Stomach (tissue), 19 donors: ENCODE measurements at regions of chr12 and their contacts with region 1.

Region 1: DNA sequence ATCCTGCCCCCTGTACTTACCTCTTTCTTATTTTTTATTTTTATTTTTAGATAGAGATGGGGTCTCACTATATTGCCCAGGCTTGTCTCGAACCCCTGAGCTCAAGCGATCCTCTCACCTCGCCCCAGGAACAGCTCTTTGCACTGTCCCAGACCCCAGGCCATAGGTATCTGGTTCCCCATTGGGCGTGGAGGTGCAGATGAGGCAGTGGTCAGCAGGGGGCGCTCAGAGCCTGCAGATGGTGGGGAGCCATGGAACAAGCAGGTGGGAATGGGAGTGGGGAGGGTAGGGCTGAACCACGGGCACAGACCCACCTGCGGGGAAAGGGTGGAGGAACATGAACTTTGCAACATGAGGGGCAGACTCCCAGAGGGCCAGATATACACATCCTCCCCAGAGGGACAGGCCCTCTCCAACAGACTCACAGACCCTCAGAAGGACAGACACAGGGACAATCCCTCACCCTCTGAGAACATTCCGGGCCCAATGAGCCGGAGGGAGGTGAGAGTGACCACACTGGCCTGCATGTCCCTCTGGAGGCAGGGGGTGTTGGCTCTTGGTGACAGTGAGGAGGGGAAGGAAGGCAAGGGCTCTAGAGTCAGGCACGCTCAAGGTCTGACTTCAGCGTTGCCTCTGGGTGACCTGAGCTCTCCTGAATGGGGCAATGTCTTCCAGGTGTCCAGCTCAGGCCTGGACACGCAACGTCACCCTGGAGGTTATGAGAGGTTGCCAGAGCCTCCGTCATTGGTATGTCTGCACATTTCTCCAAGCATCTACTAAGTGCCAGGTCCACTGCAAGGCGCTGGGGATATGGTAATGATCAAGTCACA is 34.9 kb downstream of the KRT80 start:
- DNase-seq: peak; percentile 85 to 91
- H3K4me3 ChIP-seq: no peak overlapping the region
- H3K27ac ChIP-seq: no peak overlapping the region
- H3K4me1 ChIP-seq: peaks cover 9 to 18% (median 11%) of the 10 kb centered on the region in 4 donors
- H3K27me3 ChIP-seq: peaks cover 0 to 11% (median 6%) of the 10 kb centered on the region in 3 donors
- CTCF ChIP-seq: peak in 5 of 7 experiments; percentile 86 to 93 (median 90)
- EP300 ChIP-seq: no peak
- POLR2A ChIP-seq: no peak

Region 2: DNA sequence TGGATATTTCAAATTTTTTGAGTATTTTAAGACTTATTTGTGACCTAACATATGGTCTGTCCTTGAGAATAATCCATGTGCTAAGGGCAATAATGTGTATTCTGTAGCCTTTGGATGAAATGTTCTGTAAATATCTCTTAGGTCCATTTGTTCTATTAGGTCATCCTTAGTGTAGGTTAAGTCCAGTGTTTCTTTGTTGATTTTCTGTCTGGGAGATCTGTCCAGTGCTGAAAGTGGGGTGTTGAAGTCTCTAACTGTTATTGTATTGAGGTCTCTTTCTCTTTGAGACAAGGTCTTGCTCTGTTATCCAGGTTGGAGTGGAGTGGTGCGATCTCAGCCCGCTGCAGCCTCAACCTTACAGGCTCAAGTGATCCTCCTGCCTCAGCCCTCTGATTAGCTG is 416.4 kb before region 1 on chr12:
- intact Hi-C with region 1: no loop called
- DNase-seq: no peak
- H3K4me3 ChIP-seq: no peak overlapping the region
- H3K27ac ChIP-seq: no peak overlapping the region
- H3K4me1 ChIP-seq: no peaks in the 10 kb centered on the region
- H3K27me3 ChIP-seq: peaks cover 0 to 3% (median 0%) of the 10 kb centered on the region in 3 donors
- CTCF ChIP-seq: no peak
- EP300 ChIP-seq: no peak
- POLR2A ChIP-seq: no peak

Region 3: GRCh38 chr12:51863933-51864832 is 292.8 kb before region 1 on chr12:
- intact Hi-C with region 1: no loop called
- DNase-seq: peak in 1 of 2 donors; percentile 83
- H3K4me3 ChIP-seq: peak overlapping the region; percentile 20 to 43 (median 32)
- H3K27ac ChIP-seq: no peak overlapping the region
- H3K4me1 ChIP-seq: peaks cover 18 to 29% (median 24%) of the 10 kb centered on the region in 4 donors
- H3K27me3 ChIP-seq: peaks cover 0 to 79% (median 39%) of the 10 kb centered on the region in 3 donors
- CTCF ChIP-seq: no peak
- EP300 ChIP-seq: no peak
- POLR2A ChIP-seq: no peak

Region 4: GRCh38 chr12:51905471-51906429 is 251.2 kb before region 1 on chr12:
- intact Hi-C with region 1: no loop called
- DNase-seq: peak; percentile 52 to 89
- H3K4me3 ChIP-seq: peak overlapping the region in 1 of 4 donors; percentile 57
- H3K27ac ChIP-seq: peak overlapping the region; percentile 81 to 91 (median 87)
- H3K4me1 ChIP-seq: peaks cover 14 to 35% (median 23%) of the 10 kb centered on the region in 4 donors
- H3K27me3 ChIP-seq: peaks cover 0 to 43% (median 19%) of the 10 kb centered on the region in 3 donors
- CTCF ChIP-seq: no peak
- EP300 ChIP-seq: no peak
- POLR2A ChIP-seq: no peak

Region 5: DNA sequence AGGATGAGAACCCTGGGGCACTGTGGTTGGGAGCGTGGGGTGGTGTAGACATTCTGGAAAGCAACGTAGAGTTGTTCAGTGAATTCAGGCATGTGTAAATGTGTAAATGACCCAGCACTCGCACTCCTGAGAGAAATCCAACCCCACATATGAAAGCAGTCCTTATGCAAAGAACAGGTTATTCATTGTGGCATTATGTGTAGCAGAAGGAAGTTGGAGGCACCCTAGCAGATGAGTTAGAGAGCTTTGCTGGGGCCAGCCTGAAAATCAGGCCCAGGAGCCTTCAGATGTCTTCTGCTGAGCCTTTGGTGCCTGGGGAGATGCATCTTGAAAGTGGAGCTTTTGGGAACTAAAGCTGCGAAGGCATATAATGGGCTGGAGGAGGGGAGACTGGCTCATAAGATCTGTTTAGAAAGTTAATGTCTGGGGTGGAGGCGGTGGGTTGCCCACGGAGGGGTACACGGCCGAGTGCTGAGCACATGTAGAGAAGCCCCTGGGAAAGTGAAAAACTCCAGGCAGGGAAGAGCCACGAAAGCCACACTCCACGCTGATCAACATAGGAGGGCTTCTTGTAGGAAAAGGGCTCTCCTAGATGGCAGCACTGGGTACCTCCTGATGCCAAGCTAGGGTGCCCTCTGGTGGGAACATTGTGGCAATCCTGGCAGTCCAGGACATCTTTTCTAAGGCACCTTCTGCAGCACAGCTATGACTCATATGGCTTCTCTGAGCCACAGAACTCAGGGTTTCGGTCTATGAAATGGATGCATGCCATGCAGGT is 170.3 kb after region 1 on chr12:
- intact Hi-C with region 1: loop called (anchors 5 kb)
- DNase-seq: peak; percentile 88 to 93
- H3K4me3 ChIP-seq: no peak overlapping the region
- H3K27ac ChIP-seq: no peak overlapping the region
- H3K4me1 ChIP-seq: peaks cover 0 to 10% (median 4%) of the 10 kb centered on the region in 4 donors
- H3K27me3 ChIP-seq: peaks cover 0 to 12% (median 0%) of the 10 kb centered on the region in 3 donors
- CTCF ChIP-seq: peak in 5 of 7 experiments; percentile 51 to 89 (median 75)
- EP300 ChIP-seq: no peak
- POLR2A ChIP-seq: no peak